Left ventricle myocardium superior (tissue), 1 donor: ENCODE measurements at regions of chr12 and their contacts with region 1.

Region 1: GRCh38 chr12:106919910-106920544 is 35.7 kb upstream of the TMEM263 start:
- DNase-seq: no peak
- ATAC-seq: peak; percentile 41

Region 2: DNA sequence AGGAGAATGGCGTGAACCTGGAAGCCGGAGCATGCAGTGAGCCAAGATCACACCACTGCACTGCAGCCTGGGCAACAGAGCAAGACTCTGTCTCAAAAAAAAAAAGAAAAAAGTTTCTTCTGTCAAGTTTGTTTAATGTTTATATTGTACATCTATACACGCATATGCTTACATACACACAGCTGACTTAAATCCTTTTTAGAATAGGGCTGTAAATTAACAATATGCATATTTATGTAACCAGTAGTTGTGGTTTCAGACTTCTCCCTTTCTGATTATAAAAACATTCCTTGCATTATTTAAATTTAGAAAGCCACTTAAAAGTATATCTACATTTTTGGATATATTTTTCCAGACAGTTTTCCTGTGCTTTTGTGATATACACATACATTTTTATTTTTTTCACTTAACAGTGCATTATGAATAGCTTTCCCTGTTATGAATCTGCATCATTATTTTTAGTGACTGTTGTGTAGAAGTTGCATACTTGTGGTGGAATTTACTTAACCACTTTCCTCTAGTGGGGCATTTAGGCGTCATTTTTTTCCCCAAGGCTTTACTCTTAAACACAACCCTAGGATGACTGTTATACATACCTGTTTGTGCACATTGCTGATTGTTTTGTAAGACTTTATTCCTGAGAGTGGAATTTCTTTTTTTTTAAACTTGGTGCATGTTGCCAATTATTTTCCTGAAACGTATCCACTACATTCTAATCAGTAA is 533.1 kb before region 1 on chr12:
- intact Hi-C with region 1: loop called (anchors 2 kb)
- DNase-seq: no peak
- ATAC-seq: no peak

Region 3: DNA sequence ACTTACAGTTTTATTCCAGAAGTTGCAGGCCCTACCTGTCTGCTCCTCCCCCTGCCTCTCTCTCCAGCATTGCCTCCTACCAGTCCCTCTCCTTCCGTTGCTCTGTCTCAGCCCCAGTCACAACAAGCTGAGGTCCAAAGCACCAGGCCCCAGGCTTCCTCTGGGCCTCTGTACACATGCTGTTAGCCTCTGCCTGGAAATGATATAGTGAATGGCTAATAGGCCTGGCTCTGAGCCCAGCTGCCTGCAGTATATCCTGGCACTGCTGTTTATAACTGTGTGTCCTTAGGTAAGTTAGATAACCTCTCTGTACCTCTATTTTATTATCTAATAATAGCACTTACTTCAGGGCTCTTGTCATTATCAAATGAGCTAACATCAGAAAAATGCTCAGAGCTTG is 650.7 kb after region 1 on chr12:
- intact Hi-C with region 1: no loop called
- DNase-seq: no peak
- ATAC-seq: no peak